Esophagus muscularis mucosa (tissue), 4 donors: ENCODE measurements at regions of chr4 and their contacts with region 1.

Region 1: DNA sequence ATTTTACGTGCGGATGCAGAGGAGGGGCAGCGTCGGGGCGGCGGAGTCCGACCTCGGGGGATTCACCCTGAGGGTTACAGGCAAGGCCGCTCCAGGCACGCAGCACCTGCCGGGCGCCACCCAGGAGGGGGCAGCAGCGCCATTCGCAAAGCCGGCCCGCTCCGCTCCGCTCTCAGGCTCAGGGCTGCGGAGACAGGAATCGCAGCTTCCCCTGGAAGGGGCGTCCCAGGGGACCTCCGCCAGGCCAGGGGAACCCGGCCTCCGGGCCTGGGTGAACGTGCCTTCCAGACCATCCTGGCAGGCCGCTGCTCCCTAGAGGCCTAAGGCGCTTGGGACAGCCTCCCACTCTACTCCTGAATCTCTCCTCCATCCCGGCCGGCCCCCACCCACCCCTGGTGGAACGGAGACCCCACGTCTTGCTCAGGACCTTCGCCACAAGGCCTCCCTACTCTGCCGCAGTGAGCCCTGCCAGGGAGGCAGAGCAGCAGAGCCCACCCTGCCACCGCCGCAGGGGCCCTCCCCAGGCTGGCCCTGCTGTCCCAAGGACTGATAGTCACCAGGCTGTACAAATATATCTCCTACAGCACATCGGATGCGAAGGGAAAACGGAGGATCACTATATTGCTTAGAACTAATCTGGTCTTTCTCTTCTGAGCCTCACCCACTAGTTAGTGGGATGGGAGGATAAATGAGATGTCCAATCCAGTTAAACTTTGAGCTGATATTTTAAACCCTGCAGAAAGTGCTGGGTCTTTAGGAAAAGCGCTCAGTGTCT is 115.0 kb downstream of the SMIM20 start:
- DNase-seq: no peak
- H3K4me3 ChIP-seq: peak overlapping the region; percentile 11 to 47 (median 30)
- H3K27ac ChIP-seq: peak overlapping the region in 2 of 4 donors; percentile 13 to 19
- H3K4me1 ChIP-seq: peaks cover 9 to 48% (median 37%) of the 10 kb centered on the region in 4 donors
- H3K27me3 ChIP-seq: peaks cover 0 to 5% (median 2%) of the 10 kb centered on the region in 4 donors
- CTCF ChIP-seq: peak; percentile 63 to 85 (median 75)
- EP300 ChIP-seq: no peak
- POLR2A ChIP-seq: no peak

Region 2: DNA sequence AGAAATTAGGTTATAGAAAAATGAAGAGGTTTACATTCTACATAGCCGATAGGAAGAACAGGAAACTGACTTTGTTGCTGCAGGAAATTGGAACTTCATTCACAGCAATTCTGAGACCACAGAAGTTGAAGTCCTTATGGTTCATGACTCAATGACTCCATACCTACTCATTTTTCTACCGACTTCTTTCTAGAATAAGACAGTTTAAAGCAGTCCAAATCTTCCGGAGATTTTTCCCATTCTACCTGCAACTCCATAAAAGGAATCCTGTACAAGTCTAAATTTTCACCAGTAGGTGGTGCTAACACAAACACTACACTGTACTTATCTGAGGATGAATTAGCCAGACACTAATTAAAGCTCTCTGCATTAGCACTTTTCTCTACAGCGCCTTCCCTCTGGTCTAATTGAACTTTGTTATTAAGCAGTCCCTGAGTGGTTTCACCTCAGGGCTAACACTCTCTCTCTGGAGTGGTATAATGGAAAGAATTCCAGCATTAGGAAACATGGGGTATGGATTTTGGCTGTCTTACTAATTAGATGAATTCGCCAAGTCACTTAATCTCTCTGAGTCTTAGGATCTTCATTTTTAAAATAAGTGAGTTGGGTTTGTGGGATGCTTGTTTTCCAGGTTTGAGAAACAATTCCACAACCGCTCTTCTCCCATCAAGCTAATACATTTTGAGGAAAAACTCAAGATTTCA is 53.0 kb after region 1 on chr4:
- intact Hi-C with region 1: loop called (anchors 5 kb)
- DNase-seq: no peak
- H3K4me3 ChIP-seq: no peak overlapping the region
- H3K27ac ChIP-seq: no peak overlapping the region
- H3K4me1 ChIP-seq: peaks cover 0 to 16% (median 5%) of the 10 kb centered on the region in 4 donors
- H3K27me3 ChIP-seq: no peaks in the 10 kb centered on the region
- CTCF ChIP-seq: peak; percentile 66 to 76 (median 68)
- EP300 ChIP-seq: no peak
- POLR2A ChIP-seq: no peak

Region 3: DNA sequence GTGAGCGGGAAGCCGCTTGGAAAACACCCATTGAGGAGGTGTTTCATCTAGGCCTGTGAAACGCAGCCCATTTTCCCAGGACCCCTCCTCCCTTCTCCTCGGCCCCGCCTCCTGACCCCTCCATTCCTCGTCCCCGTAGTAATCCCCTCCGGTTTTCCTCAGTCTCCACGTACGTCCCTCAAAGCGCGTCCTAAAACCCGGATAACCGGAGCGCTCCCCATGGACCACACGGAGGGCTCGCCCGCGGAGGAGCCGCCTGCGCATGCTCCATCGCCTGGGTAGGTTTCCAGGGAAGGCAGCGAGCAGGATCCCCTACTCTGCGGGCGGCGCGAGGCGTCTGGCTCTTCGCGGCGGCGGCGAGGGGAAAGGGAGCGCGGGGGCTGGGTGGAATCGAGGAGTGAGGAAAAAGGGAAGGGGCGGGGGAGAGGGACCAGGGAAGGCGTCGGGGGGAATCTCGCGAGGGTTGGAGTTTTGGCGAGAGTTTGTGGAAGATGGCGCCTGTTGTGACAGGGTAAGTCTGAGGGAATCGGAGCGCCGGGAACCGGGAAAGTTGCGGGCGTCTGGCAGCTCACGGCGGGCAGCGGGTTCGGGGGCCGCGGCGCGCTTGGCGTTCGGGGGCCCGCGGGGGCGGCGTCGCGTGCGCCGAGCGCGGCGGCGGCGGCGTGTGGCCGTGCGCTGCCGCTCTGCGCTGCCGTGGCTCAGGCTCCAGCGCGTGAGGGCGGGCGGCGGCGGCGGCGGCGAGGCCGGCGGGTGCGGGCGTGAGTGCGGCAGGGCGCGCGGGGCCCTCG is 291.8 kb after region 1 on chr4 and contains the start of gene RBPJ:
- intact Hi-C with region 1: loop called (anchors 5 kb)
- DNase-seq: peak; percentile 97
- H3K4me3 ChIP-seq: peak within 1 kb of the TSS; percentile 66 to 86 (median 82)
- H3K27ac ChIP-seq: peak within 1 kb of the TSS; percentile 90 to 98 (median 95)
- H3K4me1 ChIP-seq: peaks cover 25 to 50% (median 38%) of the 10 kb centered on the region in 4 donors
- H3K27me3 ChIP-seq: no peaks in the 10 kb centered on the region
- CTCF ChIP-seq: peak in 1 of 3 experiments; percentile 7
- EP300 ChIP-seq: no peak
- POLR2A ChIP-seq: peak; percentile 59
- total RNA-seq, gene RBPJ: 49.7 to 75.2 (median 60.8) TPM

Region 4: GRCh38 chr4:26410385-26411293 is 381.7 kb after region 1 on chr4:
- intact Hi-C with region 1: loop called (anchors 5 kb)
- DNase-seq: no peak
- H3K4me3 ChIP-seq: no peak overlapping the region
- H3K27ac ChIP-seq: no peak overlapping the region
- H3K4me1 ChIP-seq: peaks cover 12 to 39% (median 28%) of the 10 kb centered on the region in 4 donors
- H3K27me3 ChIP-seq: no peaks in the 10 kb centered on the region
- CTCF ChIP-seq: peak; percentile 61 to 66 (median 65)
- EP300 ChIP-seq: no peak
- POLR2A ChIP-seq: no peak